Heart left ventricle (tissue), 16 donors: ENCODE measurements at regions of chr1 and their contacts with region 1.

Region 1: DNA sequence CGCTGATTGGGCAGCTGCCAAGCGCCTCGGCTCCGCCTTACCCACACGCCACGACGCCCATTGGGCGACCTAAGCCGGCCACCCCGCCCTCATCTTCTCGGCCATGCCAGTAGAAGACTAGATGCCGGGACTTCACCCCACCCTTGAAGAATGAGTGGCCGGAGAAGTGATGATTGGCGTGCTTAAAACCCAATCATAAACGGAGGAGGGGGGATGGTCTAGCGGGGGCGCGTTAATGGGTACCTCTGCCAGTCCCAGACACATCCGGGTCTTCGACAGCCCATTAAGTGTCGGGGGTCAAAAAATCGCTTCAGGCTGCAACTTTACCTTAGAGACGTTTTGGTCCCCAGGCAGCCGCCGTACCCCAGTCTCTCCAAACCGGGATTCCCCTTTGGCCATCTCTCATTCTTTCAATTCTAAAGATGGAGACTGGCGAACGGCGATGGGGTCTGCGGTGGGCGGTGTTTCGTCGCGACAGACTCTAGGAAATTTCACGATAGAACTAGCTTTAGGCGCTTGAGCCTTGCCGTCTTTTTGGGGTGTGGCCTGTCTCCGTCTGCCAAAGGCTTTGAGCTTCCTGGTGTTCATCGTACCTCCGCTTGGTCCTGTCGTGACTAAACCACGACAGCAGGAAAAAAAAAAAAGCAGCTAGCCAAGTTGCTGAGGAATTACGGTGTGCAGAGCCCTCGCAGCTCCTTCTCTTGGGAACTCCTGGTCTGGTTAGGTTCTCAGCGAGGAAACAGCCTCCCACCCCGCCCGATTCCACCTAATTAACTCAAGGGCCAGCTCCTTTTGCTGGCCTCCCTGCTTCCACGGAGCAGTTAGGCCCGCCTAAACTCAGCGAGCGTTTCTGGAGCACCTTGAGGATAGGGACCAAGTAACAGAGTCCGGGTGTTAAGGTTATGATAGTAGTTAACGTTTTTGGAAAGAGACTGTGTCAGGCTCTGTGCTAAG is at the start of gene GATAD2B:
- DNase-seq: peak; percentile 100
- ATAC-seq: peak; percentile 98
- H3K4me3 ChIP-seq: peak within 1 kb of the TSS; percentile 53 to 89 (median 78)
- H3K27ac ChIP-seq: peak within 1 kb of the TSS; percentile 76 to 97 (median 90)
- H3K4me1 ChIP-seq: peaks cover 2 to 45% (median 36%) of the 10 kb centered on the region in 12 donors
- H3K27me3 ChIP-seq: no peaks in the 10 kb centered on the region
- CTCF ChIP-seq: no peak
- POLR2A ChIP-seq: peak in 1 of 2 donors; percentile 43
- total RNA-seq, gene GATAD2B: 18.1 to 53.9 (median 46.2) TPM

Region 2: GRCh38 chr1:153749408-153750005 is 173.7 kb before region 1 on chr1:
- intact Hi-C with region 1: no loop called
- DNase-seq: peak; percentile 81 to 91 (median 89)
- ATAC-seq: peak; percentile 87 to 94 (median 94)
- H3K4me3 ChIP-seq: no peak overlapping the region
- H3K27ac ChIP-seq: peak overlapping the region; percentile 33 to 78 (median 71)
- H3K4me1 ChIP-seq: peaks cover 14 to 62% (median 39%) of the 10 kb centered on the region in 12 donors
- H3K27me3 ChIP-seq: no peaks in the 10 kb centered on the region
- CTCF ChIP-seq: peak; percentile 89 to 98 (median 94)
- POLR2A ChIP-seq: no peak

Region 3: GRCh38 chr1:153880962-153881361 is 42.3 kb before region 1 on chr1:
- intact Hi-C with region 1: loop called in 2 of 10 experiments (anchors 1 to 5 kb)
- DNase-seq: peak; percentile 85 to 92 (median 91)
- ATAC-seq: peak; percentile 92 to 98 (median 95)
- H3K4me3 ChIP-seq: peak overlapping the region in 7 of 12 donors; percentile 6 to 36 (median 22)
- H3K27ac ChIP-seq: peak overlapping the region in 9 of 12 donors; percentile 14 to 59 (median 39)
- H3K4me1 ChIP-seq: peaks cover 0 to 45% (median 29%) of the 10 kb centered on the region in 12 donors
- H3K27me3 ChIP-seq: no peaks in the 10 kb centered on the region
- CTCF ChIP-seq: no peak
- POLR2A ChIP-seq: no peak

Region 4: GRCh38 chr1:153958111-153958960 is 35.1 kb after region 1 on chr1 and contains the start of gene CRTC2:
- intact Hi-C with region 1: loop called in 1 of 10 experiments (anchors 5 kb)
- DNase-seq: peak; percentile 99 to 100 (median 99)
- ATAC-seq: peak; percentile 88 to 94 (median 90)
- H3K4me3 ChIP-seq: peak within 1 kb of the TSS; percentile 82 to 100 (median 93)
- H3K27ac ChIP-seq: peak within 1 kb of the TSS; percentile 87 to 99 (median 94)
- H3K4me1 ChIP-seq: peaks cover 10 to 74% (median 56%) of the 10 kb centered on the region in 12 donors
- H3K27me3 ChIP-seq: no peaks in the 10 kb centered on the region
- CTCF ChIP-seq: peak in 1 of 12 donors; percentile 6
- POLR2A ChIP-seq: peak in 1 of 2 donors; percentile 80
- total RNA-seq, gene CRTC2: 11.0 to 27.8 (median 18.8) TPM

Region 5: DNA sequence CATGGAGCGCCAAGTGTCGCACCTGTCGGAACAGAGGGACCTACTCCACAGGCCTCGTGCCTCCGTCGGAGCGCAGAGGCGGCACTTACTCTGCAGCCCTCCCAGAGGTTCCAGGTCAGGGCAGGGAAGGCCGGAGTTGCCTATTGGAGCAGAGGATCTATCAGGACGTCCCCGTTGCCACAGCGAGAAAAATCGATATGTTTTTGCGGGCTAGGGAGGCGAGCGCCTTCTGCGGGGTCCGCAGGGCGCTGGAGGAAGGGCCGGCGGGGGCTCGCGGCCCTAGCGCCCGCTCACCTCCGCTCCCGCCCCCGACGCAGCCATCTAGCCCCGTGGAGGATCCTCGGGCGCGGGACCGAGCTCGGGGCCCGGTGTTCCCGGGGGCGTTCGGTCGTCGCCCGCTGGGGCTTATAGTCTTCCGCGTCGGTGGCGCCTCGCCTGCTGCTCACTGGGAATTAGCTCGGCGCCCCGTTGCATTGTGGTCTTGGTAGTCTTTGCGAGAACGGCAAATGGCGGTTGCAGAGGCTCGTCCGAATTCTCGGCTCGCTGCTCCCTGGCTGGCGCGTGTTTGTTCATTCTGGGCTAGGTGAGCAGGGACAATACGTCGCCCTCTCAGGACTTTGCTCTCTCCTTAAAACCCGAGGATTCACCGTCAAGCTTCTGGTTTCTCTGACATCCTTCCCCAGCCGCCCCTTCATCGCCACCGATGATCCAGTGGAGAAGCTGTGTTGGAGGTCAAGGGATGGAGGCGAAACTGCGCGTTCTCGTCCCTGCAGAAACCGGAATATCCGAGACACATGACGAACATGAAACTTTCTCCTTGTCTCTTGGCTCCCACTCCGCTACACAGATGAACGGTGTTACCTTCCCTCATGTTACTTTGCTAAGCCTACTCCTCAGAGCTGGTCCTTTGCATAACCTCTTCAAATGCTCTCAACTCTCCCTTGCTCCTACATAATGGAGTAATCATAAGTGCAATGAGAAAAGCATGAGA is 54.3 kb after region 1 on chr1 and contains the start of gene JTB:
- intact Hi-C with region 1: loop called in 1 of 10 experiments (anchors 5 kb)
- DNase-seq: peak; percentile 90 to 94 (median 92)
- ATAC-seq: peak; percentile 90 to 97 (median 96)
- H3K4me3 ChIP-seq: peak within 1 kb of the TSS; percentile 70 to 97 (median 88)
- H3K27ac ChIP-seq: peak within 1 kb of the TSS; percentile 72 to 97 (median 92)
- H3K4me1 ChIP-seq: peaks cover 0 to 40% (median 19%) of the 10 kb centered on the region in 12 donors
- H3K27me3 ChIP-seq: no peaks in the 10 kb centered on the region
- CTCF ChIP-seq: no peak
- POLR2A ChIP-seq: peak; percentile 66 to 91
- total RNA-seq, gene JTB: 55.0 to 175 (median 79.5) TPM